Endothelial cell of umbilical vein (primary cell): ENCODE measurements at regions of chr2 and their contacts with region 1.

Region 1: GRCh38 chr2:219530048-219530963 is 13.3 kb downstream of the CHPF start:
- DNase-seq: peak; percentile 79
- H3K4me3 ChIP-seq: no peak overlapping the region
- H3K27ac ChIP-seq: no peak overlapping the region
- H3K4me1 ChIP-seq: no peaks in the 10 kb centered on the region
- H3K27me3 ChIP-seq: peaks cover 30 to 38% of the 10 kb centered on the region in 2 experiments
- CTCF ChIP-seq: peak; percentile 90 to 94
- POLR2A ChIP-seq: no peak

Region 2: DNA sequence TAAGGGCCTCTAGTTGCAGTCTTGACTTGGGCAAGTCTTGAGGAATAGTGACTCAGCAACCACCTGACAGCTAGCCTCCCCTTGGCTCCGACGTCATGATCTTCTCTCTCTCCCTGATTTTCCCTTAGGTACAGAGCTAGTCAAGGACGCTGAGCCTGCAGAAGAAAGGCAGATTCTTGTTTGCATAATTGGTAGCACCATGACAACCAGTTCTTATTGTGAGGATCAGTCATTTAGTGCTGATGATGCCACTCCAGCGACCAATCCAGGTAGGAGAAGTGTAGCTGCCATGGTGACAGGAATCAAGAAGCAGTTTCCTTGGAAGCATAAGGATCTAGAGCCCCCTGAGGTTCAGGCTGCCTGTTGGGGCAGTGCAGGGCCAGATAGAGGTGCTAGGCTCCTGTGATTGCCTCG is 194.9 kb before region 1 on chr2:
- CTCF ChIA-PET with region 1: no interaction called
- POLR2A ChIA-PET with region 1: no interaction called
- dilution Hi-C with region 1: no loop called
- intact Hi-C with region 1: no loop called
- DNase-seq: no peak
- H3K4me3 ChIP-seq: no peak overlapping the region
- H3K27ac ChIP-seq: no peak overlapping the region
- H3K4me1 ChIP-seq: no peaks in the 10 kb centered on the region
- H3K27me3 ChIP-seq: peaks cover 18 to 29% of the 10 kb centered on the region in 2 experiments
- CTCF ChIP-seq: no peak
- POLR2A ChIP-seq: no peak

Region 3: DNA sequence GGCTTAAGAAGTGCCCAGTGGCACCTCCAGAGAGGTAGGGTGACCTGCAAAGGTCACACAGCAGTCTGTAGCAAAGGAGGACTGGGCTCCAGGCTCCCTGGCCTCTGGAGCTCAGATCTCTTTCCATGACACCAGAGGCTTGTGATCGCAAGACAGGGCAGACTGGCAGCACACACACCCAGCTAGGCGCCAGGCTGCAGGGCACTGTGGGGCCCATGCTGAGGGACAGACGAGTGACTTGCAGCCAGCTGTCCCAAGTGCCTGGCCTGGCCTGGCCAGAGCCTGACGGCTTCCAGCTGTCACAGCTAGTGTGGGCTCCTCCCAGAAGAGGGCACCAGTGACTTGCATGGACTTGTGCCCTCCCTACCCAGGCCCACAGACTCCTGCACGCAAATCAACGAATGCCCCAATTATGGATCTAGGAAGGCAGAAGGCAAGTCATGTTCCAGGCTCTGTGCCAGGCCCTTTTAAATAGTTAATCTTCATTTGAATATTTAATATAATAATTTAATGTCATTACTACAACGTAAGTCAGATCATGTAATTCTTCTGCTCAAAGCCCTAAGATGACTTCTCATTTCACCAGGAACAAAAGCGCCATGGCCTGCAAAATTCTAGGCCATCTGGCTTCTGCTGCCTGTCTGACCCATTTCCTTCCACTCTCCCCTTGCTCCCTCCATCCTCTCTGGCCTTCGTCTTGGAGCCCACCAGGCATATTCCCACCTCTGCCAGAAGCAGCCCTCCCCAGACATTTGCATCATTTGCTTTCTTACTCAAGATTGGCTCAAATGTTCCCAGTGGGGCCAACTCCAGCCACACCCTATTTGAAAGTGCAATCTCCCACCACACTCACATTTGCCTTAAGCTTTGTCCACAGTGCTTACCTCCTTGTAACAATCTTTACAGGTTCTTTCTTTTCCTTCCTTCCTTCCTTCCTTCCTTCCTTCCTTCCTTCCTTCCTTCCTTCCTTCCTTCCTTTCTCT is 99.4 kb before region 1 on chr2:
- CTCF ChIA-PET with region 1: interaction called, 30 read pairs
- POLR2A ChIA-PET with region 1: no interaction called
- dilution Hi-C with region 1: no loop called
- intact Hi-C with region 1: no loop called
- DNase-seq: peak; percentile 27
- H3K4me3 ChIP-seq: no peak overlapping the region
- H3K27ac ChIP-seq: no peak overlapping the region
- H3K4me1 ChIP-seq: no peaks in the 10 kb centered on the region
- H3K27me3 ChIP-seq: peaks cover 16 to 20% of the 10 kb centered on the region in 2 experiments
- CTCF ChIP-seq: peak in 1 of 2 donors; percentile 40
- POLR2A ChIP-seq: no peak

Region 4: GRCh38 chr2:219459460-219460311 is 70.6 kb before region 1 on chr2:
- CTCF ChIA-PET with region 1: interaction called, 181 read pairs
- POLR2A ChIA-PET with region 1: no interaction called
- dilution Hi-C with region 1: no loop called
- intact Hi-C with region 1: loop called (anchors 1 kb)
- DNase-seq: peak; percentile 38
- H3K4me3 ChIP-seq: no peak overlapping the region
- H3K27ac ChIP-seq: no peak overlapping the region
- H3K4me1 ChIP-seq: no peaks in the 10 kb centered on the region
- H3K27me3 ChIP-seq: no peaks in the 10 kb centered on the region
- CTCF ChIP-seq: peak; percentile 79 to 95
- POLR2A ChIP-seq: no peak

Region 5: GRCh38 chr2:219475697-219476651 is 54.3 kb before region 1 on chr2:
- CTCF ChIA-PET with region 1: interaction called, 115 read pairs
- POLR2A ChIA-PET with region 1: no interaction called
- dilution Hi-C with region 1: no loop called
- intact Hi-C with region 1: loop called (anchors 1 kb)
- DNase-seq: peak; percentile 45
- H3K4me3 ChIP-seq: no peak overlapping the region
- H3K27ac ChIP-seq: no peak overlapping the region
- H3K4me1 ChIP-seq: no peaks in the 10 kb centered on the region
- H3K27me3 ChIP-seq: peaks cover 0 to 2% of the 10 kb centered on the region in 2 experiments
- CTCF ChIP-seq: peak; percentile 80 to 91
- POLR2A ChIP-seq: no peak

Region 6: DNA sequence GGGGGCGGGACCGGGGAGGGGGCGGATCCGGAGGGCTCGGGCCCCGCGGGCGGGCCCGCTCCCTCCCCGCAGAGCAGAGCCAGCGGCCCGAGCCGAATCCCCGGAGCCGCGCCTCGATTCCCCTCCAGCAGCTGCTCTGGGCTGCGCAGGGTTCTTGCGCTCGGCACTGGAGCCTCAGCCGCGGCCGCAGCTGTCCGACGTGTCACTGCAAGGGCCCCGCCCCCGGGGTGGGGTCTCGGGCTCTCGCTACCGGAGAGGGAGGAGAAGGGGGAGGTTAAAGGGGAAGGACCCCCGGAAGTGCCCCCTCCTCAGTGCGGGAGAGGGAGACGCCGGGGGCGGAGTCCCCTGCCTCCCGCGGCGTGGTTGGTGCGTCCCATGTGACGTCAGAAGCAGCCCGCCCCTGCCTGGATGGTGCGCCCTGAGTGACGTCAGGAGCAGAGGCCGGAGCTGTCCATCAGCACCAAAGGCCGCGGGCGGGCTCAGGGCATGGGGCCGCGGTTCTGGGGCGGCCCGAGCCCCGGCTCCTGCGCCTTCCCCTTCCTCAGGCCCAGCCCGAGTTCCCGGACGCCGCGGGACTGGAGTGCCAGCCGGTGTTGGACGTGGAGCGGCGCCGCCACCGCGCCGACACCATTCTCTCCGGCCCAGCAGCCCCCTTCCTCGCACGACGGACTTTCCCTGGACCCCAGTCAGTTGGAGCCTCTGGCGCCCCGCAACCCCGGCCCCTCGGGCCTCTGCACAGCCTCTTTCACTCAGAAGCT is 13.5 kb after region 1 on chr2 and contains the starts of genes CHPF and TMEM198:
- CTCF ChIA-PET with region 1: interaction called, 29 read pairs
- POLR2A ChIA-PET with region 1: no interaction called
- dilution Hi-C with region 1: no loop called
- intact Hi-C with region 1: no loop called
- DNase-seq: peak; percentile 86
- H3K4me3 ChIP-seq: peak within 1 kb of the TSS; percentile 29 to 37 (median 29)
- H3K27ac ChIP-seq: no peak within 1 kb of the TSS
- H3K4me1 ChIP-seq: peaks cover 7% of the 10 kb centered on the region
- H3K27me3 ChIP-seq: peaks cover 18 to 23% of the 10 kb centered on the region in 2 experiments
- CTCF ChIP-seq: no peak
- POLR2A ChIP-seq: no peak
- total RNA-seq, gene CHPF: 0.24 and 0.30 TPM in 2 replicates
- total RNA-seq, gene TMEM198: not detected in 2 replicates